GM12878 (cell line): ENCODE measurements at regions of chr17 and their contacts with region 1.

Region 1: GRCh38 chr17:50055426-50056230 is at the start of gene ITGA3:
- DNase-seq: no peak
- ATAC-seq: peak; percentile 78
- H3K4me3 ChIP-seq: peak within 1 kb of the TSS; percentile 90
- H3K27ac ChIP-seq: no peak within 1 kb of the TSS
- H3K4me1 ChIP-seq: peaks cover 12% of the 10 kb centered on the region
- H3K27me3 ChIP-seq: no peaks in the 10 kb centered on the region
- CTCF ChIP-seq: no peak
- EP300 ChIP-seq: no peak
- POLR2A ChIP-seq: no peak
- RAD21 ChIP-seq: no peak
- polyA plus RNA-seq, gene ITGA3: 0.29 to 0.86 TPM

Region 2: GRCh38 chr17:50026901-50027630 is 28.6 kb before region 1 on chr17:
- CTCF ChIA-PET with region 1: interaction called, 26 read pairs
- POLR2A ChIA-PET with region 1: no interaction called
- RAD21 ChIA-PET with region 1: interaction called, 7 read pairs
- SMC1A ChIA-PET with region 1: interaction called, 6 read pairs
- in situ Hi-C with region 1: no loop called
- intact Hi-C with region 1: loop called (anchors 1 kb)
- DNase-seq: no peak
- ATAC-seq: peak; percentile 95
- H3K4me3 ChIP-seq: no peak overlapping the region
- H3K27ac ChIP-seq: no peak overlapping the region
- H3K4me1 ChIP-seq: no peaks in the 10 kb centered on the region
- H3K27me3 ChIP-seq: peaks cover 0 to 2% of the 10 kb centered on the region in 2 experiments; a peak in 3 of 4 replicates
- CTCF ChIP-seq: peak; percentile 93 to 95 (median 95)
- EP300 ChIP-seq: no peak
- POLR2A ChIP-seq: no peak
- RAD21 ChIP-seq: peak; percentile 77

Region 3: GRCh38 chr17:50079334-50080095 is 23.9 kb after region 1 on chr17:
- CTCF ChIA-PET with region 1: interaction called, 9 read pairs
- POLR2A ChIA-PET with region 1: no interaction called
- RAD21 ChIA-PET with region 1: no interaction called
- SMC1A ChIA-PET with region 1: no interaction called
- in situ Hi-C with region 1: no loop called
- intact Hi-C with region 1: loop called (anchors 1 kb)
- DNase-seq: no peak
- ATAC-seq: peak; percentile 77
- H3K4me3 ChIP-seq: no peak overlapping the region
- H3K27ac ChIP-seq: no peak overlapping the region
- H3K4me1 ChIP-seq: peaks cover 5% of the 10 kb centered on the region; the same call in 1 of the 2 replicates
- H3K27me3 ChIP-seq: no peaks in the 10 kb centered on the region
- CTCF ChIP-seq: peak; percentile 42 to 72 (median 55)
- EP300 ChIP-seq: no peak
- POLR2A ChIP-seq: no peak
- RAD21 ChIP-seq: peak; percentile 37; the same call in 1 of the 2 replicates

Region 4: DNA sequence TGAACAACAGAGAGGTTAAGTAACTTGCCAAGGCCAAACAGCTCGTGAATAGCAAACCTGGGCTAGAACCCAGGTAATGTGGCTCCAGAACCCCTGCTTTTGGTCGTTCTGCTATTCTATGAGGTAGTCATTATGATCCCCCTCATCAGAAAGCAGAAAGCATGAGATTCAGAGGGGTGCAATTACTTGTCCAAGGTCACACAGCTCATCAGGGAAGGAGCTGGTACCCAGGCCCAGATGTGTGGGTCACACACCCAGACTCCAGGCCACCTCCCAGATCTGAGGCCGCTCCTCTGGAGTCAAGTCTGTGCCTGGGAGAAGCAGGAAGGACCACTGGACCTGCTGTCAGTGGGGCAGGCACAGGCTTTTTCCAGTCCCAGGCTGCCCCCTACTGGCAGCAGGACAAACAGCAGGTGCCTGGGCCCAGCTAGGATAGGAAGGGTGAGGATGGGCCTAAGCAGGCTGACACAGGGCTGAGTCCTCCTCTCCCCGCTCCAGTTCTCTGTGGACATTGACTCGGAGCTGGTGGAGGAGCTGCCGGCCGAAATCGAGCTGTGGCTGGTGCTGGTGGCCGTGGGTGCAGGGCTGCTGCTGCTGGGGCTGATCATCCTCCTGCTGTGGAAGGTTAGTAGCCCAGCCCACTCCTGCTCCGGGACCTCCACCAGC is 31.8 kb after region 1 on chr17:
- CTCF ChIA-PET with region 1: interaction called, 38 read pairs
- POLR2A ChIA-PET with region 1: no interaction called
- RAD21 ChIA-PET with region 1: interaction called, 7 read pairs
- SMC1A ChIA-PET with region 1: interaction called, 5 read pairs
- in situ Hi-C with region 1: no loop called
- intact Hi-C with region 1: no loop called
- DNase-seq: no peak
- ATAC-seq: peak; percentile 99
- H3K4me3 ChIP-seq: no peak overlapping the region
- H3K27ac ChIP-seq: no peak overlapping the region
- H3K4me1 ChIP-seq: no peaks in the 10 kb centered on the region
- H3K27me3 ChIP-seq: no peaks in the 10 kb centered on the region
- CTCF ChIP-seq: peak; percentile 93 to 99 (median 98)
- EP300 ChIP-seq: no peak
- POLR2A ChIP-seq: no peak
- RAD21 ChIP-seq: peak; percentile 94